HCT116 (cell line): ENCODE measurements at regions of chr17 and their contacts with region 1.

Region 1: DNA sequence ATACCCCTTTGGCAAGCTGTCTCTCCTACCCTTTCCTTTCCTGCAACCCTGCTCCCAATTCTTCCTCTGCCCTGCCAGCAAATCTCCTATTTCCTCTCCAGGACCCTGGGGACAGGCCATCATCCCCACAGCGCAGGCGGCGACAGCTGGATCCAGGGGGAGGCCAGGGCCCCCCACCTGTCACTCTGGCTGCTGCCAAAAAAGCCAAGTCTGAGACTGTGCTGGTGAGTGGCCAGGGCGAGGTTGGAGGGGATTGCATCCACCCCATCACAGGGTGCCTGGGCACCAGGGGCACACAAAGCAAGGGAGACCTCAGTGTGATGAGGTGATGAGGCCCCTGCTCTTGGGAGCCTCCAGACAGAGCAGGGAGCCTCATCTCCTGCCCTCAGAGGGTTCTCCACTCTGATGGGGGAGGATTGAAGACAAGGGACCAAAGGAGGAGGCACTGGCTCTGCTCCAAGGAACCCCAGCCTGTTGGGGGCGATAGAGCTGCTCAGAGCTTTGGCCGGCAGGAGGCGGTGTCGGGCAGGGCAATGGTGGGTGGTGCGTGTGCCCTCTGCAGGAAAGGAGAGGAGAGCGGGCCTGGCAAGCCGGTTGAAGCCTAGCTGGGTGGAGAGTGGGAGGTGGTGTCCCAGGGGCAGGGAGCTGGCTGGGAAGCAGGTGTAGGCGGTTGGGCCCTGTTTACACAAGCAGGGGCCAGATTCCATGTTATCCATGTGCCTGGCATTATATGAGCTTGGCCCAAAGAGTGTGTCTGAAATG is 15.6 kb upstream of the PDK2 start:
- DNase-seq: peak; percentile 65
- ATAC-seq: peak; percentile 93
- H3K4me3 ChIP-seq: no peak overlapping the region
- H3K27ac ChIP-seq: peak overlapping the region; percentile 42
- H3K4me1 ChIP-seq: peaks cover 6 to 16% of the 10 kb centered on the region in 2 experiments; a peak in 2 of 4 replicates
- H3K27me3 ChIP-seq: no peaks in the 10 kb centered on the region
- CTCF ChIP-seq: peak; percentile 100
- POLR2A ChIP-seq: no peak
- RAD21 ChIP-seq: peak; percentile 83

Region 2: GRCh38 chr17:50026901-50027630 is 52.4 kb before region 1 on chr17:
- CTCF ChIA-PET with region 1: interaction called, 10 read pairs
- POLR2A ChIA-PET with region 1: interaction called, 4 read pairs
- RAD21 ChIA-PET with region 1: interaction called, 3 to 5 read pairs
- intact Hi-C with region 1: no loop called
- DNase-seq: peak; percentile 77
- ATAC-seq: peak; percentile 62
- H3K4me3 ChIP-seq: peak overlapping the region; percentile 52 to 55
- H3K27ac ChIP-seq: peak overlapping the region; percentile 93
- H3K4me1 ChIP-seq: peaks cover 28 to 44% of the 10 kb centered on the region in 2 experiments
- H3K27me3 ChIP-seq: no peaks in the 10 kb centered on the region
- CTCF ChIP-seq: peak; percentile 94 to 99 (median 98)
- POLR2A ChIP-seq: no peak
- RAD21 ChIP-seq: peak; percentile 97